HepG2 (cell line): ENCODE measurements at regions of chr1 and their contacts with region 1.

Region 1: GRCh38 chr1:226973898-226974543 is 33.9 kb downstream of the COQ8A start:
- DNase-seq: peak; percentile 15
- ATAC-seq: peak; percentile 47
- H3K4me3 ChIP-seq: peak overlapping the region; percentile 42 to 53 (median 44)
- H3K27ac ChIP-seq: peak overlapping the region; percentile 74
- H3K4me1 ChIP-seq: peaks cover 41% of the 10 kb centered on the region
- H3K27me3 ChIP-seq: no peaks in the 10 kb centered on the region; a peak in 1 of 5 replicates
- CTCF ChIP-seq: peak; percentile 22
- EP300 ChIP-seq: no peak
- POLR2A ChIP-seq: no peak
- RAD21 ChIP-seq: no peak

Region 2: GRCh38 chr1:226912587-226913176 is 61.3 kb before region 1 on chr1:
- CTCF ChIA-PET with region 1: no interaction called
- POLR2A ChIA-PET with region 1: no interaction called
- in situ Hi-C with region 1: no loop called
- intact Hi-C with region 1: loop called (anchors 2 kb)
- DNase-seq: peak; percentile 76
- ATAC-seq: peak; percentile 100
- H3K4me3 ChIP-seq: no peak overlapping the region
- H3K27ac ChIP-seq: no peak overlapping the region
- H3K4me1 ChIP-seq: peaks cover 7% of the 10 kb centered on the region
- H3K27me3 ChIP-seq: no peaks in the 10 kb centered on the region
- CTCF ChIP-seq: peak; percentile 100
- EP300 ChIP-seq: no peak
- POLR2A ChIP-seq: no peak
- RAD21 ChIP-seq: peak; percentile 93

Region 3: DNA sequence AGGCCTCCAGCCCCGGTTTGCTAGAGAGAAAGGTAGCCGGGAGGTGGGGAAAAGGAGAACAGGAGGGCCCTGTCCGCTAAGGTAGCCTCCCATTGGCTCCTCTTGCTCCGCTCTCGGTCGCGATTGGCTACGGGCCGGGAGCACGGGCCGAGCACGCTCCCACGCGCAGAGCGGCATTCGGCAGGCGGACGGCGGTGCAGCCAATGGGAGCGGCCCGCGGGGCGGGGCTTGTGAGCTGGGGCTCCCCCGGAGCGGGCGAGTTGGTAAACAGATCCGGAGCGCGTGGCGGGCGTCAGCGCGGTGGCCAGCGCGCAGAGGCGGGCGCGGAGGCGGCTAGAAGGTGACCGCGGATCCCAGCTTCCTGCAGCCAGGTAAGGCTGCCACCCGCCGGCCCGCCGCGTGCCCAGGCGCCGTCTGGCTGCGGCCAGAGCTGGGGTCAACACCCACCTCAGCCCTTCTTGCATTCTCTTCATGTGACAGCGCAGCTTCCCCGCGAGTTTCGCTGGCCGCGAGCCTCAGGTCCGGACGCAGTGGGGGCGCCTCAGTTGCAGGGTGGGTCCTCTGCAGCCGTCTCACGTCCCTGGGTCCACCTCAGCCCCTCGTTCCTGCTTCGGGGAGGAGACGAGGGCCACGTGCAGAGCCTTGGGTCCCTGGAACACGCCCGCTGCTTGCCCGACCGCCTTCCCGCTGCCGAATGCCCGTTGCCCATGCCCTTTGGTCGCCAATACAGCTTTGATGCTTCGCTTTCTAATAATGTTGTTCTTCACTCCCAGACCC is 33.8 kb before region 1 on chr1 and contains the start of gene COQ8A:
- CTCF ChIA-PET with region 1: interaction called, 3 read pairs
- POLR2A ChIA-PET with region 1: interaction called, 46 read pairs
- in situ Hi-C with region 1: no loop called
- intact Hi-C with region 1: loop called (anchors 1 kb)
- DNase-seq: peak; percentile 99
- ATAC-seq: peak; percentile 94
- H3K4me3 ChIP-seq: peak within 1 kb of the TSS; percentile 77 to 83 (median 80)
- H3K27ac ChIP-seq: peak within 1 kb of the TSS; percentile 97
- H3K4me1 ChIP-seq: peaks cover 62% of the 10 kb centered on the region
- H3K27me3 ChIP-seq: no peaks in the 10 kb centered on the region; a peak in 1 of 5 replicates
- CTCF ChIP-seq: peak; percentile 34; the same call in 1 of the 2 replicates
- EP300 ChIP-seq: no peak
- POLR2A ChIP-seq: no peak; a peak in 2 of 4 replicates
- RAD21 ChIP-seq: peak; percentile 61
- total RNA-seq, gene COQ8A: 63.3 and 88.7 TPM in 2 replicates

Region 4: GRCh38 chr1:226945106-226945857 is 28.7 kb before region 1 on chr1:
- CTCF ChIA-PET with region 1: interaction called, 3 read pairs
- POLR2A ChIA-PET with region 1: interaction called, 46 read pairs
- in situ Hi-C with region 1: no loop called
- intact Hi-C with region 1: loop called (anchors 1 kb)
- DNase-seq: peak; percentile 85
- ATAC-seq: peak; percentile 85
- H3K4me3 ChIP-seq: peak overlapping the region; percentile 40 to 74 (median 48)
- H3K27ac ChIP-seq: peak overlapping the region; percentile 94
- H3K4me1 ChIP-seq: peaks cover 67% of the 10 kb centered on the region
- H3K27me3 ChIP-seq: no peaks in the 10 kb centered on the region; a peak in 1 of 5 replicates
- CTCF ChIP-seq: no peak
- EP300 ChIP-seq: no peak; a peak in 1 of 4 replicates
- POLR2A ChIP-seq: peak in 1 of 2 experiments; percentile 37; a peak in 2 of 4 replicates
- RAD21 ChIP-seq: no peak

Region 5: DNA sequence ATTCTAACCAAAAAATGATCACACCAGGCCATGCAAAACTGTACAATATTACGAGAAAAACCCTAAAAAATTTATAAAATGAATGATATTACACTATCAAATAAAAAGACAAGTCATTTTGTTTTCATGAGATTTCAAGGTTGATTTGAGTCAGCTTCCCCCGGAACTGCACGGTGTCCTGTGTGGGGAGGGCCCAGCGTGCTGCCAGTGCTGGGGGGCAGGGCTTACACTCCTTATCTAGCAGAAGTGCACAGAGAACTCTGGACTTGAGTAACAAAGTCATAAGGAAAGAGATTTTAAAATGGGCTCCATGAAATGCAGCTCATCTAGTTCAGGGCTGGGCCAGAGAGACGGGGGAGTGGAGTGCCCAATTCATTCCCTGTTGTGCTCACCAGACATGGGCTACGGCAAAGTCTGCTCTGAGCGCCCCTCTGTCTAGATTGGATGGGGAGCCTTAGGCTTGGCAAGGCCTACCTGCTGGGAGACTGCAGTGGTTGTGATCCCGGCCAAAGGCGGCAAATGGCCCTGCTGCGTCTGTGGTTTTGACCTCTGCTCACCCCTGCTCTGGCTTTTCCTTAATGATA is 16.2 kb after region 1 on chr1:
- CTCF ChIA-PET with region 1: no interaction called
- POLR2A ChIA-PET with region 1: interaction called, 16 read pairs
- in situ Hi-C with region 1: no loop called
- intact Hi-C with region 1: loop called (anchors 2 kb)
- DNase-seq: peak; percentile 28
- ATAC-seq: peak; percentile 30
- H3K4me3 ChIP-seq: no peak overlapping the region
- H3K27ac ChIP-seq: peak overlapping the region; percentile 66
- H3K4me1 ChIP-seq: peaks cover 61% of the 10 kb centered on the region
- H3K27me3 ChIP-seq: no peaks in the 10 kb centered on the region
- CTCF ChIP-seq: no peak
- EP300 ChIP-seq: no peak
- POLR2A ChIP-seq: no peak
- RAD21 ChIP-seq: no peak

Region 6: DNA sequence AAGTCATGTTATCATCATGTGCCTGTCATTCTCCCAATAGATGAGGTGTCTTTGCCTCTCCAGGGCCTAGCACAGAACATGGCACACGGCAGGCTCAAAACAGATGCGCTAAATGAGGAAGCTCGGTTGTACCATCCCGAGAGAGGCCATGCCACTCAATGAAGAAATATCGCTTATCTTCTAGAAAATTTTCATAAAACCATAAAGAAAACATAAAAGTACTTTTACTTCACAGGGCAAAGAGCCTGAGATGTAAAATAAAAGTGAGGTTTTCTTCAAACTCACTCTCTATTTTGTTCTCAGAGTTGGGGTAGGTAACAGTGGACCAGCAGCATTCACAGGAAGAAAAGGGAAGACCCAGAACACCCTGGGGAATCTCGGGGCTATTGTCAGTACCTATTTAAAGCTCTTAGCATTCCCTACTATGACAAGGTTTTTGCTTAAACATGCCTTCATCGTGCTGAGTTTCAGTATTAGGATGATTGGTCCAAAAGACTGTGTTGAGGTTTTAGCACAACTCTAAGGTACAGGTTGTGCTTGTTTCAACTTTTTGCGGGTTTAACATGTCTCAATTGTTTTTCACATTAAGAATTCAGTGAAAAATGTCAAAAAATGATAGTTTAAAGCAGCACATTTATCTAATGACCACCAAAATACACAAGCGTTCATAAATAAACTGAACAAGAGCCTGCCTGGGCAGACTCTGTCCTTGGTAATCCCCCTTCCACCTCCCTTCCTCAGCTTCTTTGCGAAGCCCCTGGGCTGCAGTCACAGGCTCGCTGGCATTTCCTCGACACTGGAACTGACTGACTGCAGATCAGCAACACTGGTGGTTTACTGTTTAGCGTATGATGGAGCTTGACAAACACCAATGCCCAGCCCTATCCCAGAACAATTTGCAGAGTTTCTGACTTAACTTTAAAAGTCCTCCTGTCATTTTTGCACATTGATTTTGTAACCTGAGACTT is 21.6 kb after region 1 on chr1:
- CTCF ChIA-PET with region 1: no interaction called
- POLR2A ChIA-PET with region 1: interaction called, 16 read pairs
- in situ Hi-C with region 1: no loop called
- intact Hi-C with region 1: loop called (anchors 2 kb)
- DNase-seq: no peak
- ATAC-seq: no peak
- H3K4me3 ChIP-seq: no peak overlapping the region
- H3K27ac ChIP-seq: no peak overlapping the region
- H3K4me1 ChIP-seq: peaks cover 42% of the 10 kb centered on the region
- H3K27me3 ChIP-seq: no peaks in the 10 kb centered on the region
- CTCF ChIP-seq: no peak
- EP300 ChIP-seq: no peak
- POLR2A ChIP-seq: no peak
- RAD21 ChIP-seq: no peak